ENCODE measurements at regions of chr20 and their contacts with region 1.

Region 1: GRCh38 chr20:1381753-1382591 is 10.9 kb downstream of the FKBP1A start:
- DNase-seq: no peak

Region 2: GRCh38 chr20:1301031-1301529 is 80.9 kb before region 1 on chr20:
- CTCF ChIA-PET with region 1: no interaction called
- POLR2A ChIA-PET with region 1: no interaction called
- DNase-seq: no peak

Region 3: GRCh38 chr20:1360094-1360846 is 21.7 kb before region 1 on chr20:
- CTCF ChIA-PET with region 1: no interaction called
- POLR2A ChIA-PET with region 1: no interaction called
- DNase-seq: no peak

Region 4: GRCh38 chr20:1392823-1393506 is 11.0 kb after region 1 on chr20 and contains the start of gene FKBP1A:
- CTCF ChIA-PET with region 1: no interaction called
- POLR2A ChIA-PET with region 1: interaction called, 14 read pairs
- DNase-seq: peak; percentile 94